HCT116 (cell line): ENCODE measurements at regions of chr6 and their contacts with region 1.

Region 1: GRCh38 chr6:153801917-153802316 is 237.1 kb upstream of the OPRM1 start:
- DNase-seq: no peak
- ATAC-seq: no peak
- H3K4me3 ChIP-seq: no peak overlapping the region
- H3K27ac ChIP-seq: no peak overlapping the region
- H3K4me1 ChIP-seq: no peaks in the 10 kb centered on the region
- H3K27me3 ChIP-seq: 0 out of 2 replicates have a peak, but pooled peaks cover 18% of the 10 kb centered on the region
- CTCF ChIP-seq: no peak
- POLR2A ChIP-seq: no peak
- RAD21 ChIP-seq: no peak

Region 2: DNA sequence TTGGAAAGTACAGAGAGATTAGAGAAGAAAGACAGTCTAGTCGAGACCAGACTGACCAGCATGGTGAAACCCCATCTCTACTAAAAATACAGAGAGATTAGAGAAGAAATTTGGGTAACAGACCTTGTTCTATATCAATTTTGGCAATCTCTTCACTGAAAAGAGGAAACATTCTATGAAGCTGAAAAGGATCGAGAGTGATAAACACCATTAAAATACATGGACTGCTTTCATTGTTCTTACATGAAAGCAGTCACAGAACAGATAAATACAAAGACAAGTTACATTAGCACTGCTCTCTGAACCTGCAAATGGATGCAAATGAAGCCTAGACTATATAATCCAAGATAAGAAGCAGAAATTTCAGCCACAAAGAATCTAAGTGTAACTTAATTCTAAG is 228.7 kb after region 1 on chr6:
- CTCF ChIA-PET with region 1: no interaction called
- POLR2A ChIA-PET with region 1: no interaction called
- RAD21 ChIA-PET with region 1: no interaction called
- intact Hi-C with region 1: loop called (anchors 1 kb)
- DNase-seq: no peak
- ATAC-seq: no peak
- H3K4me3 ChIP-seq: no peak overlapping the region
- H3K27ac ChIP-seq: no peak overlapping the region
- H3K4me1 ChIP-seq: no peaks in the 10 kb centered on the region
- H3K27me3 ChIP-seq: no peaks in the 10 kb centered on the region
- CTCF ChIP-seq: no peak
- POLR2A ChIP-seq: no peak
- RAD21 ChIP-seq: no peak